Heart right ventricle (tissue), 16 donors: ENCODE measurements at regions of chr6 and their contacts with region 1.

Region 1: DNA sequence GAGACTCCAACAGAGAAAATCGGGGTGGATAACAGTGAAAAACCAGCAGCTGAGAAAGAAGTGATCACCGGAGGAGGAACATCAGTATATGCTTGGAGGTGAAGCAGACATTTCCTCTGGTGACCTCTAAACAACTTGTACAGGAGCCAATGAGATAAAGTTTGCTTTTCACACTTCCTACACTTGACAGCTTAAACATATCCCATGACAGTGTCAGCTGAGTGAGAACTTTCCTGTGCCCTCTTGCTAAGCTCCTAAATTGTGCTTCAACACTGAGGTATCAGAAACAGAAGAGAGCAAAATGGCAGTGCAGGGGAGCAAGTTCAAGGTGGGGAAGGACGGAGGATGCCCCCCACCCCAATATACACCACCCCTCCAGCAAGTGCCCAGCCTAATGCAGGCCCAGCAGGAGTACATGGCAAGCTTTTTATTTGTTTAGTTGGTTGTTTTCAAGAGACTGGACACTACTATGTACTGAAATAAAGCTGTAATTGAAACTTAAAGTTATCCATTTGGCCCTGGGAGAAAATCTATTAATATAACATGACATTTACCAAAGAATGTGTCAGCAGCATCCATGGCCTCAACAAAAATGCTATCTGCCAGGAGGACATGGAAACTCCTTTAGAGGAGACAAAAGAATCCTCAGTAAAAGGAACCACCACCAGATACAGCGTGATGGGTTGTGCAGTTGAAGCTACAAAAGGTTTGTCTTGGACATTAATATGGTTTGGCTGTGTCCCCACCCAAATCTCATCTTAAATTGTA is 540.2 kb downstream of the PRKN start:
- DNase-seq: peak in 1 of 2 donors; percentile 48
- ATAC-seq: peak; percentile 90 to 98 (median 95)
- H3K4me3 ChIP-seq: no peak overlapping the region
- H3K27ac ChIP-seq: peak overlapping the region; percentile 45 to 89 (median 80)
- H3K4me1 ChIP-seq: peaks cover 0 to 33% (median 4%) of the 10 kb centered on the region in 9 donors
- H3K27me3 ChIP-seq: no peaks in the 10 kb centered on the region
- CTCF ChIP-seq: no peak

Region 2: DNA sequence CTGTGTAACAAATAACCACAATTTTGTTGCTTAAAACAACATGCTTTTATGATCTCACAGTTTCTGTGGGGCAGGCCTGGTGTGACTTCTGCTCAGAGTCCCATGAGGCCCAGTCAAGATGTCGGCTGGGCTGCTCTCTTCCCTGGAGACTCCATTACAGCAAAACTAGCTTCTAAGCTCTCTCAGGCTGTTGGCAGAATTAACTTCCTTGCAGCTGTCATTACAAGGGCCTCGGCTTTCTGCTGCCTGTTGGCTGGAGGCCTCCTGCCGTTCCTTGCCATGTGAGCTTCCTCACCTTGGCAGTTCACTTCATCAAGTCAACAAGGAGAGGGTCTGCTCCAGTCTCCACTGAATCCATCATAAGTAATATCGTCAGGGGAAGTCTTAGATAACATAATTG is 119.0 kb before region 1 on chr6:
- intact Hi-C with region 1: no loop called
- DNase-seq: peak in 1 of 2 donors; percentile 28
- ATAC-seq: peak in 3 of 8 donors; percentile 11 to 61 (median 49)
- H3K4me3 ChIP-seq: no peak overlapping the region
- H3K27ac ChIP-seq: no peak overlapping the region
- H3K4me1 ChIP-seq: peaks cover 0 to 7% (median 0%) of the 10 kb centered on the region in 9 donors
- H3K27me3 ChIP-seq: no peaks in the 10 kb centered on the region
- CTCF ChIP-seq: no peak

Region 3: GRCh38 chr6:162230147-162230752 is 42.9 kb after region 1 on chr6:
- intact Hi-C with region 1: loop called in 1 of 10 experiments (anchors 5 kb)
- DNase-seq: peak in 1 of 2 donors; percentile 20
- ATAC-seq: peak; percentile 43 to 86 (median 74)
- H3K4me3 ChIP-seq: no peak overlapping the region
- H3K27ac ChIP-seq: peak overlapping the region in 6 of 10 donors; percentile 21 to 61 (median 53)
- H3K4me1 ChIP-seq: peaks cover 4 to 45% (median 23%) of the 10 kb centered on the region in 9 donors
- H3K27me3 ChIP-seq: no peaks in the 10 kb centered on the region
- CTCF ChIP-seq: no peak

Region 4: GRCh38 chr6:162468326-162468725 is 281.0 kb after region 1 on chr6:
- intact Hi-C with region 1: loop called in 1 of 10 experiments (anchors 5 kb)
- DNase-seq: peak in 1 of 2 donors; percentile 67
- ATAC-seq: peak; percentile 68 to 94 (median 84)
- H3K4me3 ChIP-seq: no peak overlapping the region
- H3K27ac ChIP-seq: peak overlapping the region in 9 of 10 donors; percentile 28 to 85 (median 76)
- H3K4me1 ChIP-seq: peaks cover 0 to 12% (median 0%) of the 10 kb centered on the region in 9 donors
- H3K27me3 ChIP-seq: no peaks in the 10 kb centered on the region
- CTCF ChIP-seq: no peak